ENCODE measurements at regions of chr1 and their contacts with region 1.

Region 1: GRCh38 chr1:40344597-40344996 is 27.5 kb upstream of the COL9A2 start:
- DNase-seq: peak in 3 of 4 donors; percentile 18 to 65 (median 23)
- ATAC-seq: no peak
- H3K4me3 ChIP-seq: no peak overlapping the region
- H3K27ac ChIP-seq: no peak overlapping the region
- H3K4me1 ChIP-seq: no peaks in the 10 kb centered on the region
- H3K27me3 ChIP-seq: no peaks in the 10 kb centered on the region
- CTCF ChIP-seq: no peak
- POLR2A ChIP-seq: peak in 1 of 3 donors; percentile 47

Region 2: DNA sequence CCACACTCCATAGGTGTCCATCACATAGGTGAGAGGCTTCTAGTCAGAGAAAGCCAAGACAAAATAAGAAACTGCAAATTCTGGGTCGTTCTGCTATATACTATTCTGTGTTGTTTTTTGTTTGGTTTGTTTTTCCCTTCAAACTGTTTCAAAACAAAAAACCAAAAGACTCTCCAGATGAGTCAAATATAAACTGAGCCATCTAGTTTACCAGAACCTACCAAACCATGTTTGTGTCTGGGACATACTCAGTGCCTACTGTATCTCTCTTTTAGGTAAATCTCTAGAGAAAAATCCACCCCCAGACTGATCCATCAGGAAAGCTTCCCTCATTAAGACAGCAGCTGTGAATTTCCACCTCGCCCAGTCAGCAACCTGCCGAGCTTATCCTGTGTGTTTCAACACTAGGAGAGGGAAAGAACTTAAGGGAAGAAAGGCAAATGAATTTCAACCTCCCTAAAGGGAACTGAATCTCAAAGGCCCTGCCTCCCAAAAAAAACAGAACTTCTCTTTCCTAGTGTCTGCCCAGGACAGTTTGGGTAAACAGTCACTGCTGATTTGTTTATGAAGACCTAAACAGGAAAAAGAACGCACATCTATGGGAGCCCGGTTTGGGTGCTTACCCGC is 264.7 kb before region 1 on chr1:
- intact Hi-C with region 1: loop called (anchors 5 kb)
- DNase-seq: no peak
- ATAC-seq: no peak
- H3K4me3 ChIP-seq: no peak overlapping the region
- H3K27ac ChIP-seq: no peak overlapping the region
- H3K4me1 ChIP-seq: no peaks in the 10 kb centered on the region
- H3K27me3 ChIP-seq: no peaks in the 10 kb centered on the region
- CTCF ChIP-seq: no peak
- POLR2A ChIP-seq: no peak

Region 3: GRCh38 chr1:40107290-40108262 is 237.0 kb before region 1 on chr1:
- intact Hi-C with region 1: no loop called
- DNase-seq: peak; percentile 18 to 39 (median 20)
- ATAC-seq: peak; percentile 81
- H3K4me3 ChIP-seq: no peak overlapping the region
- H3K27ac ChIP-seq: no peak overlapping the region
- H3K4me1 ChIP-seq: no peaks in the 10 kb centered on the region
- H3K27me3 ChIP-seq: no peaks in the 10 kb centered on the region
- CTCF ChIP-seq: no peak
- POLR2A ChIP-seq: no peak

Region 4: GRCh38 chr1:40153073-40153770 is 191.4 kb before region 1 on chr1:
- intact Hi-C with region 1: loop called (anchors 5 kb)
- DNase-seq: peak in 3 of 4 donors; percentile 18 to 37 (median 22)
- ATAC-seq: peak; percentile 56
- H3K4me3 ChIP-seq: no peak overlapping the region
- H3K27ac ChIP-seq: no peak overlapping the region
- H3K4me1 ChIP-seq: no peaks in the 10 kb centered on the region
- H3K27me3 ChIP-seq: no peaks in the 10 kb centered on the region
- CTCF ChIP-seq: peak; percentile 33 to 75 (median 66)
- POLR2A ChIP-seq: no peak

Region 5: GRCh38 chr1:40462956-40463590 is 118.5 kb after region 1 on chr1:
- intact Hi-C with region 1: no loop called
- DNase-seq: no peak
- ATAC-seq: no peak
- H3K4me3 ChIP-seq: no peak overlapping the region
- H3K27ac ChIP-seq: no peak overlapping the region
- H3K4me1 ChIP-seq: no peaks in the 10 kb centered on the region
- H3K27me3 ChIP-seq: no peaks in the 10 kb centered on the region
- CTCF ChIP-seq: no peak
- POLR2A ChIP-seq: no peak

Measured in body of pancreas (tissue), 4 donors.